ENCODE measurements at regions of chr20 and their contacts with region 1.

Region 1: DNA sequence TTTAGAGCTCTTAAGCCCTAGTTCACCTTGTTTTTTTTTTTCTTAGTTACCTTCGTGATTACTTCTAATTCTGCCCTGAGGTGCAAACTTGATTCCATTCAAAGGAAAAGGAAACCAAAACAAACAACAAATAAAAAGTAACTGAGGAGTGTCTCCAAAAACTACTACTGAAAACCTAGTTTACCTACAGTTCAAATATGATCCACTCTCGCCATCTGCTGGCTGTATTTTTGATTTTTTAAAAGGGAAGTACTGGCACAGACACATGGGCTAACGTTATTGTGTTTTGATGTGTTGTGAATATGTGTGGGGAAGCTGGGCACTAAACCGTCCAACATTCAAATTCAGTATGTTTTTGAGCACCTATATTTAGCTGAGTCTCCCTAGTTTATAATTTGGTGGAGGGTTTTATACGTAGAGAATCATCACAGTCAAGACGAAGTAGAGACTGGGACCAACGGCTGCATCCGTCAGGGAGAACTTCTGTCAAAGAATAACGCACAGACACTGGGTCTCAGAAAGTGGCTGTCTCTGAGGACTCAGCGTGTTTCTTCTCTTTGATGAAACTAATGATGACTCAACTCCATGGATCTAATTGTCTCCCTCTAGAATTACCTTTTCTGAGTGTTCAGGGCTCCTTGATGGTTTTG is 373.5 kb upstream of the BTBD3 start:
- DNase-seq: no peak
- H3K4me3 ChIP-seq: peak overlapping the region in 1 of 2 donors; percentile 32
- H3K27ac ChIP-seq: no peak overlapping the region
- H3K4me1 ChIP-seq: peaks cover 0 to 6% (median 2%) of the 10 kb centered on the region in 4 donors
- H3K27me3 ChIP-seq: no peaks in the 10 kb centered on the region
- CTCF ChIP-seq: peak; percentile 56 to 83

Region 2: GRCh38 chr20:9978397-9979004 is 1565.7 kb before region 1 on chr20:
- intact Hi-C with region 1: loop called (anchors 10 kb)
- DNase-seq: peak in 1 of 2 donors; percentile 56
- H3K4me3 ChIP-seq: no peak overlapping the region
- H3K27ac ChIP-seq: no peak overlapping the region
- H3K4me1 ChIP-seq: peaks cover 0 to 6% (median 0%) of the 10 kb centered on the region in 4 donors
- H3K27me3 ChIP-seq: no peaks in the 10 kb centered on the region
- CTCF ChIP-seq: peak; percentile 69 to 85

Region 3: GRCh38 chr20:10427060-10427692 is 1117.0 kb before region 1 on chr20:
- intact Hi-C with region 1: loop called (anchors 10 kb)
- DNase-seq: peak in 1 of 2 donors; percentile 51
- H3K4me3 ChIP-seq: no peak overlapping the region
- H3K27ac ChIP-seq: no peak overlapping the region
- H3K4me1 ChIP-seq: peaks cover 0 to 20% (median 4%) of the 10 kb centered on the region in 4 donors
- H3K27me3 ChIP-seq: no peaks in the 10 kb centered on the region
- CTCF ChIP-seq: peak; percentile 73 to 80

Region 4: DNA sequence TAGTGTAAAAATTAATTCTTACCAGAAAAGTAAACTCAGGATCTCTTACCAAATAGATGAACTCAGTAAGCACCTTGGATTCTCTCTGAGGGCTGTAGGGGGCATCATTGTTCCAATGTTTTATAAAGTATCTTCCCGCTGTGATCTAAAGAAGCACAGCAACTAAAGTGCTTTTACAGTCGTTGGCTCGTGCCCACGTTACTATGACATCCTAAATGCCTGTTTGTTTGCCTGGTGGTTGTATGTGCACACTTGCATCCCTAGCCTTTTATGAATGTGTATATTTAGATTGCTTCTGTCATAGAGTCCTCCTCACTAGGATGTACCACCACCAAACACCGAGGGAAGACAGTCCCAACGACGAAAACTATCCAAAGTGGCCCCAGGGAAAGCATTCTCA is 1074.6 kb before region 1 on chr20:
- intact Hi-C with region 1: loop called (anchors 10 kb)
- DNase-seq: peak; percentile 60 to 73
- H3K4me3 ChIP-seq: no peak overlapping the region
- H3K27ac ChIP-seq: peak overlapping the region; percentile 27 to 43
- H3K4me1 ChIP-seq: peaks cover 0 to 68% (median 32%) of the 10 kb centered on the region in 4 donors
- H3K27me3 ChIP-seq: no peaks in the 10 kb centered on the region
- CTCF ChIP-seq: peak; percentile 68 to 76

Region 5: DNA sequence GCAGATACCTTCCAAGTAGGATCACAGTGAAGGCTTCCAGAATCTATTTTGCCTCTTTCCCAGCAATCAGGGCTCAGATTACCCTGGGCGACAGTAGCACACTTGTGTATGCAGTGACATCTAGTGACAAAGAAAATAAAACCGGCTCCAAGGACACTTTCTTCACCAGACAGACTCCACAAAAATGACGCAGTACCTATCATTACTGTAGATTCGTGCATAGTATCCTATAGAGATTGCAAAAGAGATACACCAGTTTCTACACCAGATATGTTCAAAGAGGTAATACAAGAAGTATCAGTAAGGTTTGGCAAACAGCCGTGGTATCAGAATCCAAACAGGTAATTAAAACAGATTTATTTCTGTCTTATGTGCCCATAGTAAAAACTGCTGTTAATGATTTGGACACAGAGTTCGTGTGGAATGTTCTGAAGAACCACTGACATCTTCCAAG is 270.0 kb before region 1 on chr20:
- intact Hi-C with region 1: loop called (anchors 10 kb)
- DNase-seq: peak in 1 of 2 donors; percentile 32
- H3K4me3 ChIP-seq: no peak overlapping the region
- H3K27ac ChIP-seq: no peak overlapping the region
- H3K4me1 ChIP-seq: peaks cover 0 to 10% (median 0%) of the 10 kb centered on the region in 4 donors
- H3K27me3 ChIP-seq: peaks cover 0 to 2% of the 10 kb centered on the region in 2 donors
- CTCF ChIP-seq: peak; percentile 58 to 66